Gastrocnemius medialis (tissue), 4 donors: ENCODE measurements at regions of chr1 and their contacts with region 1.

Region 1: DNA sequence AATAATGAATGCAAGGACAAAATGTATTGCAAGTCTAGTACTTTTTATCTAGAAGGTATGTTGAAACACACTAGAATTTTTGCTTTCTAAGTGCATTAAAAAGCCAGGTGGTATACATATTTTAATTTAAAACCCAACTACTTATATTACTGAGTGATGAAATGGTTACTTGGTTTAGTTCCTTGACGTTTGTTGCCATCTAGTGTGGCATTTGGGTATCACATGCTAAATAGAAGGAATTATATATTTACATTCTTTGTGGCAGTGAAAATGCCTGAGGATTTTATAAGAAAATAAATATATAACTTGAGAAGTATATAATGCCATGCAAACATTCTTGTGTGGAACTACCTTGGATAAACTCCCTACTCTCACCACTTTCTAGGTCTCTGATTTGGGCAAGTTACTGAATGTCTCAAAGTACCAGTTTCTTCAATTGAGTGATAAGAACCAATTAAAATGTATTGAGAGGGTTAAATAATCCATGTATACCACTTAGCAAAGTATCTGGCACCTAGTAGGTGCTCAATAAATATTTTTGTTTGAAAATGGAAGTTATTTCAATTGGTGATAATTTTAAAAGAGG is 69.6 kb downstream of the SDCCAG8 start:
- DNase-seq: no peak
- ATAC-seq: peak in 1 of 2 donors; percentile 46
- H3K4me3 ChIP-seq: no peak overlapping the region
- H3K27ac ChIP-seq: no peak overlapping the region
- H3K4me1 ChIP-seq: no peaks in the 10 kb centered on the region
- H3K27me3 ChIP-seq: no peaks in the 10 kb centered on the region
- CTCF ChIP-seq: peak; percentile 63 to 84 (median 81)
- POLR2A ChIP-seq: no peak

Region 2: DNA sequence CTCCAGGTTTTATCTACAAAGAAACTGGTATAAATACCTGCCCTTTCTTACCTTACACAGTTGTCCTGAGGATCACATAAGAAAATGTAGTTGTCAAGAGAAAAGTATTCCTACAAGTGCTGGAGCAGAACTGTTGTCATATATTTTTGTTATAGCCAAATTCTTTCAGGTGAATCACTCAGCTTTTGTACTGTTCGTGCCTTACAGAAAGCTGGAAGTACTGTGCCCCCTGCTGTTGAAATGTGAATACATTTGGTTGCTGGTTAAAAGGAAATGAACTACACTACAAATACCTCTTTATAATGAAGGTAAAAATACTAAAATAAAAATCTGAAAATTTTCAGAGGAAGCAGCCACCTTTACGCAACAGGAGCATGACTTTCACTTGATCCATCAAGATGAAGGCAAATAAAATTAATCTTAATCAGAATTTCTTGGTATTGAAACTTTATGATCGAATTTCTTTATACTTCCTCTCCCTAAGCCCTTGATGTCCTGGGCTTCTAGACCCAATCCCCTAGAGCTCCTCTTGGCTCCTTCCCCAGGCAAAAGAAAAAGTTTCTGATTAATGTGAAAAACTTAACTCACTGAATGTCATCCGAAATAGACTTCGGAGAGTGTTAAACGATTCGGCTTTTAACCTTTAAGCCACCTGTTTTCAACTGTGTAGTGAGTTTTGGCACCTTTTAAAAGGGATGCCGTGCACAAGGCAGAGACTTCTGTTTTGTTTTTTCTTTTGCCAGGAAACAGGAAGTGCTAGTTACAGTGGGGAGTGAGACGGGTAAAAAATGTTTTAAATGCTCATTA is 1697.7 kb before region 1 on chr1:
- in situ Hi-C with region 1: no loop called
- intact Hi-C with region 1: loop called (anchors 10 kb)
- DNase-seq: no peak
- ATAC-seq: no peak
- H3K4me3 ChIP-seq: no peak overlapping the region
- H3K27ac ChIP-seq: no peak overlapping the region
- H3K4me1 ChIP-seq: peaks cover 5% of the 10 kb centered on the region in 2 donors
- H3K27me3 ChIP-seq: no peaks in the 10 kb centered on the region
- CTCF ChIP-seq: peak in 4 of 5 experiments; percentile 8 to 41 (median 29)
- POLR2A ChIP-seq: no peak

Region 3: DNA sequence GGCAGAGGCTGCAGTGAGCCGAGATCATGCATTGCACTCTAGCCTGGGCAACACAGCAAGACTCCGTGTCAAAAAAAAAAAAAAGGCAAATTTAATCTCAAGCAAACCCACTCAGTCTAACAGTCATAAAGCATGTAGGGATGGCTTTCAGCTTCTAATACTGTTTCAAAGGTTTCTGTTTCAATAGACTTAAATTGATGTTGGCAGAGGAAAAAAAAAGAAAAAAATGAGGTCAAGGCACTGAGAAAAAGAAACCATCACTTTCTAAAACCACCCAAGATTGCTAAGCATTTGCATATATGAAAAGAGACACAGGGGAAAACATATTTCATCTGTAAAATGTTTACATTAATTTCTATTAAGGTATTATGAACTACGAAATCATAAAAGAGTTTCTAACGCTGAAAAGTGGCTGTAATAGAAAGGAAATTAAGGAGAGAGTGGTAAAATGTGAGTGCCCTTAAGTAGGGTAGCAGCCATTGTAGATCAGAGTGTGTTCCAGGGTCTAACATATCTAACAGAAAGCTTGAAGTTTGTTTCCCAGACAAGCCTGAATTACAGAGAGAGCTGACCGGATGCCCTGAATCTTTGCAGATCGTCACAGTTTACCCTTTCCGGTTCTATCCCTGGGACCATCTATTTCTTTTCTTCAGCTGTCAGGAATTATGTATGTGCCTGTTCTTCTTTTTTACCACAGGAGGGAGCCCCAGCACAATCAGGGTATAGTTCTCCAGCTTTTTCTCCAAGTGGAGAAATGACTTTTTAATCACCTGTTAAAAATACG is 870.9 kb before region 1 on chr1:
- in situ Hi-C with region 1: loop called (anchors 10 to 25 kb)
- intact Hi-C with region 1: no loop called
- DNase-seq: no peak
- ATAC-seq: no peak
- H3K4me3 ChIP-seq: no peak overlapping the region
- H3K27ac ChIP-seq: no peak overlapping the region
- H3K4me1 ChIP-seq: no peaks in the 10 kb centered on the region
- H3K27me3 ChIP-seq: peaks cover 0 to 3% (median 2%) of the 10 kb centered on the region in 3 donors
- CTCF ChIP-seq: peak in 2 of 5 experiments; percentile 31 to 46
- POLR2A ChIP-seq: no peak

Region 4: GRCh38 chr1:242467556-242468145 is 857.7 kb before region 1 on chr1:
- in situ Hi-C with region 1: loop called in 3 of 4 experiments (anchors 25 kb)
- intact Hi-C with region 1: loop called (anchors 5 kb)
- DNase-seq: peak in 1 of 2 donors; percentile 15
- ATAC-seq: peak in 1 of 2 donors; percentile 33
- H3K4me3 ChIP-seq: no peak overlapping the region
- H3K27ac ChIP-seq: no peak overlapping the region
- H3K4me1 ChIP-seq: no peaks in the 10 kb centered on the region
- H3K27me3 ChIP-seq: no peaks in the 10 kb centered on the region
- CTCF ChIP-seq: peak in 4 of 5 experiments; percentile 9 to 39 (median 22)
- POLR2A ChIP-seq: no peak

Region 5: GRCh38 chr1:243312952-243313634 is 12.3 kb before region 1 on chr1:
- in situ Hi-C with region 1: no loop called
- intact Hi-C with region 1: loop called (anchors 2 kb)
- DNase-seq: no peak
- ATAC-seq: no peak
- H3K4me3 ChIP-seq: no peak overlapping the region
- H3K27ac ChIP-seq: no peak overlapping the region
- H3K4me1 ChIP-seq: no peaks in the 10 kb centered on the region
- H3K27me3 ChIP-seq: no peaks in the 10 kb centered on the region
- CTCF ChIP-seq: no peak
- POLR2A ChIP-seq: no peak

Region 6: DNA sequence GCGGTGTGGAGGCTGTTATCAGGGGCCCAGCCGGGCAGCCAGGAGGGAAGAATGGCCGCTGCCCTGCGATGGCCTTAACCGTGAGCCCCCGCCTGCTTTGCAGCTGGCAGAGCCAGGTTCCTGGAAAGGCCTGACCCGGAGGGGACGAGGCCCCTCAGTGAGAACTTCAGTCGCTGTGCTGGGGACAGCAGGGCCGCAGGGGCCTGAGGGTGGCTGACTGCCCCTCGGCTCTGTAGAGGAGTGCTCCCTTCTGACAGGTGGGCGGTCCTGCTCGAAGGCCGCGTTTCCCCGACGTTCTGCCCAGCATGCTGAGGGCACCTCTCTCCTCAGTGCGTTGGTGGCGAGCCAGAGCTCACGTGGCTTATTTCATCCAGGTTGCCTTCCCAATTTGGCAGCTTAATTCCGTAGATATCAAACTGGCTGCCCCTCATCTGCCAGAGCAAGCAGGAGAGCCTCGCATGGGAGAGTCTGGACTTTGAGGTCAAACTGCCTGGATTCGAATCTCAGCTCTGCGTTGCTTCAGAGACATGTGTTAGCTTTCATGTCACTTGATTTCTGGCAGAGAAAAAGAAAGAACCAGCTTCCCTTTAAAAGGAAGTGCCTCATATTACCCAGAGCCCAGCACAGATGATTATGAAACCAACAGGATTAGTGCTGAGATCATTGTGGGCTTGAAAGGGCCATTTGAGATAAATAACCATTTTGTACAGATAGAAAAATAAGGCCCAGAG is 170.2 kb after region 1 on chr1:
- in situ Hi-C with region 1: no loop called
- intact Hi-C with region 1: no loop called
- DNase-seq: no peak
- ATAC-seq: peak; percentile 68 to 85
- H3K4me3 ChIP-seq: no peak overlapping the region
- H3K27ac ChIP-seq: peak overlapping the region; percentile 42 to 73 (median 66)
- H3K4me1 ChIP-seq: peaks cover 8 to 13% of the 10 kb centered on the region in 2 donors
- H3K27me3 ChIP-seq: no peaks in the 10 kb centered on the region
- CTCF ChIP-seq: no peak
- POLR2A ChIP-seq: no peak

Region 7: DNA sequence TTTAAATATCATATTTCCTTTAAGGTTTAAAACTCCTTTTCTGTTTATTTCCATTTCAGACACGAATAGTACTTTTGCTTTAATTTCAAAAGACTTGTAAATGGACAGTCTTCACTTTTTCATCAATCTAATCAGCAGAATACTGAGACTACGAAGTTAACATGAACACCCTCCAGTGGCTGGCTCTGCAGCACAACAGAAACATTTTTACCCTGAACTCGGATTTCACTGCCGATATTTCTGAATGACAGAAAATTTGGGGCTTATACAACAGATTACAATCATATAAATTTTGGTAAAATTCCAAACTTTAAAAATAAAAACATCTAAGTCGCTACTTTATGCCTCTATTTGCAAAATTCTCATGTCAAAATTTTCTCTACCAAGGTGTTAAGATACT is 438.4 kb after region 1 on chr1:
- in situ Hi-C with region 1: loop called in 1 of 4 experiments (anchors 25 kb)
- intact Hi-C with region 1: no loop called
- DNase-seq: no peak
- ATAC-seq: no peak
- H3K4me3 ChIP-seq: no peak overlapping the region
- H3K27ac ChIP-seq: no peak overlapping the region
- H3K4me1 ChIP-seq: peaks cover 0 to 11% of the 10 kb centered on the region in 2 donors
- H3K27me3 ChIP-seq: no peaks in the 10 kb centered on the region
- CTCF ChIP-seq: no peak
- POLR2A ChIP-seq: no peak

Region 8: DNA sequence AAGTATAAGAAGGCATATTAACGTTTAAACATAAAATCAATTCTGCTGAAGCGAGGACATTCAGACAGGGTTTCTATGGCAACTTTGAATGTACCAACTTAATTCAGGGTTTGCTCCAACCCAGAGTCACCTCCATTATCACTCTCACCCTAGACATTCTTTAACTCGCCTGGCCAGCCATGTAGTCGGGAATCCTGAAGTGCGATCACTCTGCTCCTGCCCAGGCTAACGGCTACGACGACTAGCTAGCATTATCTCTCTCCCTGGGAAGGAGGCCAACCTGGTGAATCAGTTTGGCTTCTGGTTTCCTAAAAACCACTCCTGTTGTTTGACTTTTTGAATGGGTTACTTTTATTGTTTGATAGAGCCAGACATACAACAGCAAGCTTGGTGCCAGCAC is 686.8 kb after region 1 on chr1:
- in situ Hi-C with region 1: no loop called
- intact Hi-C with region 1: no loop called
- DNase-seq: no peak
- ATAC-seq: no peak
- H3K4me3 ChIP-seq: peak overlapping the region in 1 of 4 donors; percentile 7
- H3K27ac ChIP-seq: no peak overlapping the region
- H3K4me1 ChIP-seq: peaks cover 4 to 6% of the 10 kb centered on the region in 2 donors
- H3K27me3 ChIP-seq: peaks cover 13 to 22% (median 15%) of the 10 kb centered on the region in 3 donors
- CTCF ChIP-seq: no peak
- POLR2A ChIP-seq: no peak